ENCODE measurements at regions of chr18 and their contacts with region 1.

Region 1: GRCh38 chr18:3129053-3129864 is 90.5 kb downstream of the MYOM1 start:
- DNase-seq: peak; percentile 84
- H3K4me3 Mint-ChIP-seq: no peak overlapping the region
- H3K27ac Mint-ChIP-seq: no peak overlapping the region
- H3K4me1 Mint-ChIP-seq: peaks cover 10% of the 10 kb centered on the region
- H3K27me3 Mint-ChIP-seq: no peaks in the 10 kb centered on the region
- CTCF ChIP-seq: peak; percentile 72

Region 2: DNA sequence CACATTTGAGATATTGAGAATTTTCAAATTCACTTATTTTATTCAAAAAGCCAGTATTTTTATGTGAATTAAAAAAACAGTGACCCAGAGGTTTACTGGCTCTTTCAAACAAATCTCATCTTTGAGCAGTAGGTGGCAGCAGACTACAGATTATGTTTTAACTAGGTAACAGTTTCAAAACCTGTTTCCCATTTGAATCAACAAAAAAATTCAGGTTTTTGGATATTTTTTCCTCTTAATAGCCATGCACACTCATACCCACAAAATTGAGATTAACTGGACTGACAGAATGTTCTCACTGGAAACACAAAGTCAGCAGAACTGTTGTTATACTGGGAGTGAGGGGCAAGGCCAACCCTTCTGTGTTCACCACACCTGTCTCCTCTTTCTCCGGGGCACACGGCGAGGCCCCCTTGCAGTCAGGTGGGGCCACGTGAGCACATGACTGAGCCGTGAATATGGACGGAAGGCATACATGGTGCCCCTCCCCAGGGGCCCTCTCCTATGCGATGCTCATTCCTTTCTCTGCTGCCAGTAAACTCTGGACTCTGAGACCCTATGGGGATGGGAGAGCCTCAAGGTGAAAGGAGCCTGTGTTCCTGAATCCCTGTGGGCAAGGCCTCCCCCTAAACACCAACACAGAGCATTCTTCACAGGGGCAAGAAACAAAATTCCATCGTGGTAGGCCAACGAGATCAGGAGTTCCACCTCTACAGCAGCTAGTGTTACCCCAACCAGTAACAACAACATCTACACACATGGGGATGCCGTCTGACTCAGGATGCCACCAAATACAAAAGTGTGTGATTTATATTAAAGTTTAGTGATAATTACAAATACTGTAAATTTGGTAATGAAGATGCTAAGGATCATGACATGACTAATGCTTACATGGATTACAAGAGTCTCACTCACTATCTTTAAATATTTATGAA is 196.7 kb before region 1 on chr18:
- CTCF ChIA-PET with region 1: interaction called, 7 read pairs
- POLR2A ChIA-PET with region 1: no interaction called
- intact Hi-C with region 1: loop called (anchors 1 kb)
- DNase-seq: peak; percentile 71
- H3K4me3 Mint-ChIP-seq: no peak overlapping the region
- H3K27ac Mint-ChIP-seq: no peak overlapping the region
- H3K4me1 Mint-ChIP-seq: peaks cover 10% of the 10 kb centered on the region
- H3K27me3 Mint-ChIP-seq: no peaks in the 10 kb centered on the region
- CTCF ChIP-seq: peak; percentile 69

Region 3: GRCh38 chr18:2948038-2948437 is 181.2 kb before region 1 on chr18:
- CTCF ChIA-PET with region 1: interaction called, 18 read pairs
- POLR2A ChIA-PET with region 1: interaction called, 3 read pairs
- intact Hi-C with region 1: no loop called
- DNase-seq: peak; percentile 48
- H3K4me3 Mint-ChIP-seq: no peak overlapping the region
- H3K27ac Mint-ChIP-seq: no peak overlapping the region
- H3K4me1 Mint-ChIP-seq: no peaks in the 10 kb centered on the region
- H3K27me3 Mint-ChIP-seq: no peaks in the 10 kb centered on the region
- CTCF ChIP-seq: peak; percentile 35

Region 4: GRCh38 chr18:3012964-3013804 is 116.1 kb before region 1 on chr18 and contains the start of gene LPIN2:
- CTCF ChIA-PET with region 1: no interaction called
- POLR2A ChIA-PET with region 1: no interaction called
- intact Hi-C with region 1: loop called (anchors 5 kb)
- DNase-seq: peak; percentile 97
- H3K4me3 Mint-ChIP-seq: peak within 1 kb of the TSS; percentile 82
- H3K27ac Mint-ChIP-seq: peak within 1 kb of the TSS; percentile 92
- H3K4me1 Mint-ChIP-seq: peaks cover 21% of the 10 kb centered on the region
- H3K27me3 Mint-ChIP-seq: no peaks in the 10 kb centered on the region
- CTCF ChIP-seq: no peak
- total RNA-seq, gene LPIN2: 13.1 and 15.9 TPM in 2 replicates

Region 5: DNA sequence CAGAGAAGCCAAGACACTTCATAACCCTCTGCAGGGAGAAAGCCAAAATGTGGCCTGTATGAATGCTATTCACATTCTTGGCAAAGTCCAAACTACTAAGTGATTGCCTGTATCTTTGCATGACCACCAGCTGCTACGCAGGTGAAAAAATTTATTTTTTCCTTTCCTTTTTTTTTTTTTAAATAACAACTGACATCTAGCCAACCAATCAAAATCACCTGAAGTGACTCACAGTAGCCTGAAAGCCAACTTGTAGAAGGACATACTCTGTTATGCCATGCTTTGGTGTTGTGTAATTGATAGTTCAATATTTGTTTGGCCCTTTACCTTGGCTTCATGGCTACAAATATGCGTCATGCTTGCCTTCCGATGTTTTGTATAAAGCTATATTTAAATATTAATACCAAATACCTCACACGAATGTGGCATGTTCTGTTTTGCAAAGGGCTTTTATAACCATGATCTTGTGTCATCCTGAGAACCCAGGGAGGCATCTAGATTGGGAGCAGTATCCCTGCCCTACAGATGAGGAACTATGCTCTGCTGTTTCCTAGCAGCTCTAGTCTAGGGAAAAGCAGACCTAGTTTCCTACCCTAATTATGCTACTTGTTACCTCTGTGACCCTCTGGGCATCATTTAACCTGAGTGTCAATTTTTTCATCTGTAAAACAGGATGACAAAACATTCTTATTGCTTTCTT is 11.6 kb before region 1 on chr18:
- CTCF ChIA-PET with region 1: interaction called, 13 read pairs
- POLR2A ChIA-PET with region 1: interaction called, 6 read pairs
- intact Hi-C with region 1: no loop called
- DNase-seq: peak; percentile 92
- H3K4me3 Mint-ChIP-seq: no peak overlapping the region
- H3K27ac Mint-ChIP-seq: peak overlapping the region; percentile 83
- H3K4me1 Mint-ChIP-seq: peaks cover 28% of the 10 kb centered on the region
- H3K27me3 Mint-ChIP-seq: no peaks in the 10 kb centered on the region
- CTCF ChIP-seq: no peak

Region 6: GRCh38 chr18:3281456-3282400 is 152.5 kb after region 1 on chr18:
- CTCF ChIA-PET with region 1: no interaction called
- POLR2A ChIA-PET with region 1: no interaction called
- intact Hi-C with region 1: no loop called
- DNase-seq: peak; percentile 80
- H3K4me3 Mint-ChIP-seq: no peak overlapping the region
- H3K27ac Mint-ChIP-seq: no peak overlapping the region
- H3K4me1 Mint-ChIP-seq: peaks cover 6% of the 10 kb centered on the region
- H3K27me3 Mint-ChIP-seq: no peaks in the 10 kb centered on the region
- CTCF ChIP-seq: peak; percentile 52